HepG2 (cell line): ENCODE measurements at regions of chr16 and their contacts with region 1.

Region 1: DNA sequence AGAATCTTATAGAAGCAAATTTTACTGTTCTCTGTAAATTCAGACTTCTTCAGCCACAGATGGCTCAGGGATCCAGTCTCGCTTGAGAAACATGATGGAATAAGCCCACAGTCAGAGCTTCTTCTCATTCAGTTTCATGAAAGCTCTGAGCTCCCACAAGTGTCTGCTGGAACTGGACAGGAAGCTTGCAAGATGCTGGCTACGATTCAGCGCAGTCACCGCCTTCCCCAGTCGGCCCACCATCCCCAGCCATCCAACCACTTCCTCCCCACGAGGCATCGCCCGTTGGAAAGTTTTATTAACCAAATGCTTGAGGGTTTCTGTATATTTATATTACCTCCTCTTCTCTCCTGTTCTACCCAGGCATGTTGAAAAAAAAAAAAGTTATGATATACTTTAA is 171.7 kb downstream of the ZFHX3 start:
- DNase-seq: no peak
- ATAC-seq: no peak
- H3K4me3 ChIP-seq: no peak overlapping the region
- H3K27ac ChIP-seq: peak overlapping the region; percentile 86
- H3K4me1 ChIP-seq: peaks cover 68% of the 10 kb centered on the region
- H3K27me3 ChIP-seq: no peaks in the 10 kb centered on the region
- CTCF ChIP-seq: no peak
- EP300 ChIP-seq: no peak
- POLR2A ChIP-seq: no peak
- RAD21 ChIP-seq: no peak

Region 2: GRCh38 chr16:72844225-72844920 is 31.8 kb before region 1 on chr16:
- CTCF ChIA-PET with region 1: no interaction called
- POLR2A ChIA-PET with region 1: no interaction called
- in situ Hi-C with region 1: no loop called
- intact Hi-C with region 1: no loop called
- DNase-seq: no peak
- ATAC-seq: no peak
- H3K4me3 ChIP-seq: no peak overlapping the region
- H3K27ac ChIP-seq: no peak overlapping the region
- H3K4me1 ChIP-seq: no peaks in the 10 kb centered on the region
- H3K27me3 ChIP-seq: no peaks in the 10 kb centered on the region
- CTCF ChIP-seq: no peak
- EP300 ChIP-seq: no peak
- POLR2A ChIP-seq: no peak
- RAD21 ChIP-seq: no peak

Region 3: GRCh38 chr16:72856797-72857196 is 19.4 kb before region 1 on chr16:
- CTCF ChIA-PET with region 1: no interaction called
- POLR2A ChIA-PET with region 1: interaction called, 13 read pairs
- in situ Hi-C with region 1: no loop called
- intact Hi-C with region 1: no loop called
- DNase-seq: peak; percentile 53
- ATAC-seq: peak; percentile 90
- H3K4me3 ChIP-seq: no peak overlapping the region
- H3K27ac ChIP-seq: no peak overlapping the region
- H3K4me1 ChIP-seq: peaks cover 7% of the 10 kb centered on the region; the same call in 1 of the 2 replicates
- H3K27me3 ChIP-seq: no peaks in the 10 kb centered on the region
- CTCF ChIP-seq: peak; percentile 65
- EP300 ChIP-seq: no peak
- POLR2A ChIP-seq: no peak
- RAD21 ChIP-seq: peak; percentile 39; the same call in 1 of the 2 replicates

Region 4: DNA sequence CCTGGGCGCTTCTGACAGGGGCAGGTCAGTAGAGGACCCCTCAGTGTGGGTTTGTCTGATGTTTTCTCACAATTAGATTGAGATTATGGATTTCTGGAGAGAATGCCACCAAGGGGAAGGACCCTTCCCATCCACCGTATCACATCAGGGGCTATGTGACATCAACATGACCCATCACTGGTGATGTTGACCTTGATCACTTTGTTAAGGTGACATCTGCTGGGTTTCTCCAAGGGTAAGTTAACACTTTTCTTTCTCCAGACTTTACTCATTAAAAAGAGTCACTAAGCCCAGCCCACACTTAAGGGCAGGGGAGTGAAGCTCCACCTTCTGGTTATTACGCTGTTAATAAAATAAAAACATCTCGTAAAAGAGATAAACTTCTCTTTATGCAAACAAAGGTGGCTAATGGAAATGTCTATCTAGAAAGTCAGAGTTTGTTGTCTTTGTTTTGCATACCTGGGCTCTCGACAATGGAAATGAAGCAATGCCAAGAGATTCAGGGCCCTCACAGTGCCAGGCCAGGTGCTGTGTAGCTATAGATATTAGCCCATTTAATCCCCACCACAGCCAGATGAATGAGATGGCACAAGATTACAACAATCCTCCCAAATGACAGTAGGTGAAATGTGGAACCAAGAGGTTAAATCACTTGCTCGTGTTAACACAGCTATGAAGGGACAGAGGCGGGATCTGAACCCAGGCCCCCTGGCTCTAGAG is 37.3 kb after region 1 on chr16:
- CTCF ChIA-PET with region 1: no interaction called
- POLR2A ChIA-PET with region 1: interaction called, 10 read pairs
- in situ Hi-C with region 1: no loop called
- intact Hi-C with region 1: no loop called
- DNase-seq: no peak
- ATAC-seq: no peak
- H3K4me3 ChIP-seq: no peak overlapping the region
- H3K27ac ChIP-seq: peak overlapping the region; percentile 57
- H3K4me1 ChIP-seq: peaks cover 34% of the 10 kb centered on the region
- H3K27me3 ChIP-seq: no peaks in the 10 kb centered on the region
- CTCF ChIP-seq: no peak
- EP300 ChIP-seq: no peak
- POLR2A ChIP-seq: no peak
- RAD21 ChIP-seq: no peak

Region 5: GRCh38 chr16:72927199-72928089 is 51.2 kb after region 1 on chr16:
- CTCF ChIA-PET with region 1: no interaction called
- POLR2A ChIA-PET with region 1: interaction called, 32 read pairs
- in situ Hi-C with region 1: loop called (anchors 5 kb)
- intact Hi-C with region 1: loop called (anchors 1 kb)
- DNase-seq: peak; percentile 95
- ATAC-seq: peak; percentile 17; the same call in 2 of the 3 replicates
- H3K4me3 ChIP-seq: peak overlapping the region in 1 of 3 experiments; percentile 6; a peak in 1 of 6 replicates
- H3K27ac ChIP-seq: peak overlapping the region; percentile 96
- H3K4me1 ChIP-seq: peaks cover 99% of the 10 kb centered on the region
- H3K27me3 ChIP-seq: no peaks in the 10 kb centered on the region
- CTCF ChIP-seq: peak; percentile 40
- EP300 ChIP-seq: peak; percentile 78 to 97
- POLR2A ChIP-seq: no peak
- RAD21 ChIP-seq: peak; percentile 33; the same call in 1 of the 2 replicates

Region 6: DNA sequence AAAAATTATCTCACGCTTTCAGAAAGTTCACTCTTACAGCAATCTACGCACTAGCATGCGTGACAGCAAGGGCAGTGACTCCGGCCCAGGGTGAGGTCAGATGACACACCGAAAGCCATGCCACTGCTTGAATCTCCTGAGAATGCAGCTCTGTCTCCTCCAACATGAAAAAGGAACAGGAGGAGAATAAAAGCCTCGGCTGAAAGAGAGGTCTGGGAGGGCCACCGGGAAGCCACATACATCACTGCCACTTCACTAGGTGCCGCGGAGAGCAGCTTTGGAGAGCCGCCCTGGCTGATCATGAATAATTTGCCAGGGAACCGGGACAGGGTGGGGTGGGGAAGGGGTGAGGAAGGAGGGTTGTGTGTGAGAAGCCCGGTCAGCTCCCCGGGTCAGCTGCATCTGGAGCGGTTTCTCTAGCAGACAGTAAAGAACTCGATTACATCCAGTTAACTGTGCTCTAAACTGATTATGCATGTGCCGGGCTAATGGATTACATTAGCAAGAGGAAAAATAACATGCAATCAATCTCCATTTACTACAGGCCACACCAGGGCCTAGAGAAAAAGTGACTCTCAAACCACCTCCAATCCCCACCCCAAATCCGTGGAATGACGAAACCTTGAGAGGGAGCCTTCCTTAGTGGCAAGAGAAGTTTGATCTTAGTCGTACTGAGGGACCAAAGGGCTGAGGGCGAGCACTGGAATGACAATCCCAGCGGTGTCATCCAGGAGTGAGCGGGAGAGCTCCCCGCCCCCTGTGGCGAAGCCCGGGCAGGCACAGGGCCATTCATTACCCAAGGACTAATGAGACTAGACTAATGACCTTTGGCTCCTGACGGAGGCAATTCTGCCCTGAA is 71.4 kb after region 1 on chr16:
- CTCF ChIA-PET with region 1: no interaction called
- POLR2A ChIA-PET with region 1: no interaction called
- in situ Hi-C with region 1: no loop called
- intact Hi-C with region 1: loop called (anchors 1 kb)
- DNase-seq: peak; percentile 79
- ATAC-seq: peak; percentile 99
- H3K4me3 ChIP-seq: no peak overlapping the region
- H3K27ac ChIP-seq: peak overlapping the region; percentile 40
- H3K4me1 ChIP-seq: peaks cover 33% of the 10 kb centered on the region
- H3K27me3 ChIP-seq: no peaks in the 10 kb centered on the region
- CTCF ChIP-seq: peak; percentile 62
- EP300 ChIP-seq: no peak
- POLR2A ChIP-seq: no peak
- RAD21 ChIP-seq: peak; percentile 77

Region 7: GRCh38 chr16:73058221-73058615 is 182.0 kb after region 1 on chr16:
- CTCF ChIA-PET with region 1: no interaction called
- POLR2A ChIA-PET with region 1: interaction called, 23 read pairs
- in situ Hi-C with region 1: loop called (anchors 5 kb)
- intact Hi-C with region 1: no loop called
- DNase-seq: no peak
- ATAC-seq: no peak
- H3K4me3 ChIP-seq: peak overlapping the region; percentile 75 to 78 (median 77); a peak in 4 of 6 replicates
- H3K27ac ChIP-seq: peak overlapping the region; percentile 57
- H3K4me1 ChIP-seq: peaks cover 53% of the 10 kb centered on the region
- H3K27me3 ChIP-seq: no peaks in the 10 kb centered on the region
- CTCF ChIP-seq: no peak
- EP300 ChIP-seq: no peak
- POLR2A ChIP-seq: no peak
- RAD21 ChIP-seq: peak; percentile 26; the same call in 1 of the 2 replicates